CD4-positive, alpha-beta T cell (primary cell): ENCODE measurements at regions of chr15 and their contacts with region 1.

Region 1: GRCh38 chr15:22786868-22787698 is 639 bp downstream of the NIPA1 start:
- DNase-seq: peak in 4 of 14 experiments; percentile 8 to 45 (median 24)
- ATAC-seq: peak; percentile 23
- H3K4me3 ChIP-seq: peak overlapping the region; percentile 62
- H3K4me3 Mint-ChIP-seq: peak overlapping the region; percentile 92
- H3K27ac ChIP-seq: no peak overlapping the region
- H3K27ac Mint-ChIP-seq: peak overlapping the region; percentile 70
- H3K4me1 ChIP-seq: peaks cover 21% of the 10 kb centered on the region
- H3K4me1 Mint-ChIP-seq: peaks cover 37% of the 10 kb centered on the region
- H3K27me3 ChIP-seq: no peaks in the 10 kb centered on the region
- H3K27me3 Mint-ChIP-seq: no peaks in the 10 kb centered on the region
- CTCF ChIP-seq: no peak

Region 2: GRCh38 chr15:22838292-22839042 is 51.4 kb after region 1 on chr15 and contains the start of gene NIPA2:
- CTCF ChIA-PET with region 1: interaction called, 3 read pairs
- POLR2A ChIA-PET with region 1: interaction called, 20 read pairs
- intact Hi-C with region 1: loop called in 1 of 2 experiments (anchors 1 kb)
- DNase-seq: peak; percentile 97 to 99 (median 98)
- ATAC-seq: peak; percentile 96
- H3K4me3 ChIP-seq: peak within 1 kb of the TSS; percentile 97
- H3K4me3 Mint-ChIP-seq: peak within 1 kb of the TSS; percentile 97
- H3K27ac ChIP-seq: peak within 1 kb of the TSS; percentile 90 to 94
- H3K27ac Mint-ChIP-seq: peak within 1 kb of the TSS; percentile 92
- H3K4me1 ChIP-seq: peaks cover 15% of the 10 kb centered on the region
- H3K4me1 Mint-ChIP-seq: peaks cover 35% of the 10 kb centered on the region
- H3K27me3 ChIP-seq: no peaks in the 10 kb centered on the region
- H3K27me3 Mint-ChIP-seq: no peaks in the 10 kb centered on the region
- CTCF ChIP-seq: no peak
- total RNA-seq, gene NIPA2: 33.9 to 36.7 TPM